ENCODE measurements at regions of chr16 and their contacts with region 1.

Region 1: DNA sequence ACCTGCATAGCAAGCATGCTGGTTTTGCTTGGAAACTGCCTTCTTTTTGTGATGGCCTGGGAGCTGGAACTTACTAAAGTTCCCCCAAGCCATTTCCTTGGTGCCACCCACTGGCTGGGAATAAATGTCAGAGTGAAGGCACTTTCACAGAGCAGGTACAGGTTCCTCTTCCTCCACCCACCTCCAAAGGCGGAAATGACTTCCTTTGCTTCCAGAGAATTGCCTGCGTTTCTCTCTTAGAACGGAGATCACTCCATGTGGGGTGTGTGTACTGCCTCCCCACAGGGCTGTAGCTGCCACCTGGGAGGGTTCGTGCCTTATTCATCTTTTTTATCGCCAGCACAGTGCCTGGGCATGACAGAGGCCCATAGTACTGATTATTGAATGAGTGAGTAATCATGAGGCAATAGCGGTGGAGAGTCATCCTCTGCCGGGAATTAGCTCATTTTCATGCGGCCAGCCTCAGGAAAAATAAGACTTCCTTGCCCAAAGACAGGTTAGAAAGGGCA is 32.2 kb upstream of the HAS3 start:
- DNase-seq: no peak
- H3K4me3 ChIP-seq: no peak overlapping the region
- H3K4me3 Mint-ChIP-seq: no peak overlapping the region
- H3K27ac Mint-ChIP-seq: peak overlapping the region; percentile 48
- H3K4me1 ChIP-seq: peaks cover 34% of the 10 kb centered on the region
- H3K4me1 Mint-ChIP-seq: peaks cover 43% of the 10 kb centered on the region
- H3K27me3 ChIP-seq: no peaks in the 10 kb centered on the region
- H3K27me3 Mint-ChIP-seq: no peaks in the 10 kb centered on the region
- CTCF ChIP-seq: no peak

Region 2: GRCh38 chr16:69031877-69032301 is 41.3 kb before region 1 on chr16:
- CTCF ChIA-PET with region 1: no interaction called
- POLR2A ChIA-PET with region 1: interaction called, 10 read pairs
- intact Hi-C with region 1: loop called (anchors 5 kb)
- DNase-seq: peak; percentile 86 to 93
- H3K4me3 ChIP-seq: no peak overlapping the region
- H3K4me3 Mint-ChIP-seq: peak overlapping the region; percentile 25
- H3K27ac Mint-ChIP-seq: peak overlapping the region; percentile 80
- H3K4me1 ChIP-seq: peaks cover 15% of the 10 kb centered on the region
- H3K4me1 Mint-ChIP-seq: peaks cover 8% of the 10 kb centered on the region
- H3K27me3 ChIP-seq: no peaks in the 10 kb centered on the region
- H3K27me3 Mint-ChIP-seq: no peaks in the 10 kb centered on the region
- CTCF ChIP-seq: no peak

Region 3: GRCh38 chr16:69040138-69040909 is 32.9 kb before region 1 on chr16:
- CTCF ChIA-PET with region 1: no interaction called
- POLR2A ChIA-PET with region 1: interaction called, 10 read pairs
- intact Hi-C with region 1: no loop called
- DNase-seq: peak in 1 of 2 experiments; percentile 28
- H3K4me3 ChIP-seq: no peak overlapping the region
- H3K4me3 Mint-ChIP-seq: no peak overlapping the region
- H3K27ac Mint-ChIP-seq: no peak overlapping the region
- H3K4me1 ChIP-seq: peaks cover 14% of the 10 kb centered on the region
- H3K4me1 Mint-ChIP-seq: peaks cover 10% of the 10 kb centered on the region
- H3K27me3 ChIP-seq: no peaks in the 10 kb centered on the region
- H3K27me3 Mint-ChIP-seq: no peaks in the 10 kb centered on the region
- CTCF ChIP-seq: no peak

Region 4: GRCh38 chr16:69105489-69106361 is 32.5 kb after region 1 on chr16 and contains the start of gene HAS3:
- CTCF ChIA-PET with region 1: interaction called, 10 read pairs
- POLR2A ChIA-PET with region 1: interaction called, 6 read pairs
- intact Hi-C with region 1: no loop called
- DNase-seq: peak; percentile 73 to 89
- H3K4me3 ChIP-seq: peak within 1 kb of the TSS; percentile 50
- H3K4me3 Mint-ChIP-seq: peak within 1 kb of the TSS; percentile 92
- H3K27ac Mint-ChIP-seq: peak within 1 kb of the TSS; percentile 61
- H3K4me1 ChIP-seq: peaks cover 9% of the 10 kb centered on the region
- H3K4me1 Mint-ChIP-seq: peaks cover 20% of the 10 kb centered on the region
- H3K27me3 ChIP-seq: no peaks in the 10 kb centered on the region
- H3K27me3 Mint-ChIP-seq: no peaks in the 10 kb centered on the region
- CTCF ChIP-seq: peak; percentile 33 to 60
- total RNA-seq, gene HAS3: 8.3 TPM in 2 replicates

Region 5: GRCh38 chr16:69243479-69243878 is 170.3 kb after region 1 on chr16:
- CTCF ChIA-PET with region 1: no interaction called
- POLR2A ChIA-PET with region 1: no interaction called
- intact Hi-C with region 1: no loop called
- DNase-seq: no peak
- H3K4me3 ChIP-seq: no peak overlapping the region
- H3K4me3 Mint-ChIP-seq: no peak overlapping the region
- H3K27ac Mint-ChIP-seq: no peak overlapping the region
- H3K4me1 ChIP-seq: no peaks in the 10 kb centered on the region
- H3K4me1 Mint-ChIP-seq: no peaks in the 10 kb centered on the region
- H3K27me3 ChIP-seq: no peaks in the 10 kb centered on the region
- H3K27me3 Mint-ChIP-seq: no peaks in the 10 kb centered on the region
- CTCF ChIP-seq: no peak

Measured in Caco-2 (cell line).